ENCODE measurements at regions of chr1 and their contacts with region 1.

Region 1: GRCh38 chr1:115112496-115113375 is 23.4 kb upstream of the TSPAN2 start:
- DNase-seq: peak in 2 of 3 donors; percentile 39 to 55
- ATAC-seq: peak; percentile 57 to 80 (median 68)
- H3K4me3 ChIP-seq: no peak overlapping the region
- H3K27ac ChIP-seq: no peak overlapping the region
- H3K4me1 ChIP-seq: no peaks in the 10 kb centered on the region
- H3K27me3 ChIP-seq: no peaks in the 10 kb centered on the region
- CTCF ChIP-seq: peak; percentile 75 to 93 (median 91)
- POLR2A ChIP-seq: no peak

Region 2: GRCh38 chr1:114986286-114986685 is 126.5 kb before region 1 on chr1:
- intact Hi-C with region 1: loop called in 1 of 2 experiments (anchors 10 kb)
- DNase-seq: no peak
- ATAC-seq: no peak
- H3K4me3 ChIP-seq: no peak overlapping the region
- H3K27ac ChIP-seq: no peak overlapping the region
- H3K4me1 ChIP-seq: no peaks in the 10 kb centered on the region
- H3K27me3 ChIP-seq: no peaks in the 10 kb centered on the region
- CTCF ChIP-seq: no peak
- POLR2A ChIP-seq: no peak

Region 3: GRCh38 chr1:115051850-115052249 is 60.9 kb before region 1 on chr1:
- intact Hi-C with region 1: no loop called
- DNase-seq: no peak
- ATAC-seq: no peak
- H3K4me3 ChIP-seq: no peak overlapping the region
- H3K27ac ChIP-seq: no peak overlapping the region
- H3K4me1 ChIP-seq: no peaks in the 10 kb centered on the region
- H3K27me3 ChIP-seq: no peaks in the 10 kb centered on the region
- CTCF ChIP-seq: no peak
- POLR2A ChIP-seq: no peak

Measured in right lobe of liver (tissue), 6 donors.